ENCODE measurements at regions of chr2 and their contacts with region 1.

Region 1: DNA sequence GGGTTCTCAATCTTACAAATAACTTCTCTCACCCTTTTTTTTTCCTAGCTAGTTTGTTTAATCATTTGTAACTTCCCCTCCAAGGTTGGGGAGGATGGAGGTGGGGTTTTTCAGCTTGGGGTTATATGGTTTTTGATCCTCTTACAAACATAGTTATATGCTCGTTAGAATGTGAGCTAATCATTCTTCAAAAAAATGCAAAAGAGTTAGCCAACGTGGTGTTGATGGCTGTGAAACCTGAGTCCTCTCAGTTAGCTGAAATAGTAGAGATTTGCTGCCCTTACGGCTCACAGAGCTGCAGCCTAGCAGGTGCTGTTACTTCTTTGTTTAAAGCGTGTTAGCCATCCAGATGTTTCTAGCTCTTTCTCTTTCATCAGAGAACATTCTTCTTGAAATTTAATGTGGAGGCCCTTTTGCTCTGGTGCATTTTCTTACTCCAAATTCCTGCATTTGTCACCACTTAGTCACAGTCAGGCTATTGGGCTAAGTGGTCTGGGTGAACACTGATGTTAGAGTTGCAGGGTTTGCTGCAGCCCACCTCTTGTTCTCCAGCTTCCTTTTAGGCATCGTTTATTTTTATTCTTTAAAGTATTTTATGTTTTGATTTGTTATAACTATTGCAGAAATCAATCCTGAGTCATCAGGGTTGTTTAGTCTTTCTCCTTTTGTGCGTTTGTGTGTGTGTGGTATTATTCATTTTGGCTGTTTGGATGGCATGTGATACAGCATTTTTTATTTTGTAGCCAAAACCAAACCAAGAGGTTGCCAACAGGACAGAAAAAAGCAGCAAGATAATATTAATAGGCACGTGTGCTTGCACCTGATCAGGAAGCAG is 41.1 kb downstream of the LIMS1 start:
- DNase-seq: no peak
- ATAC-seq: no peak
- H3K4me3 ChIP-seq: no peak overlapping the region
- H3K27ac ChIP-seq: no peak overlapping the region
- H3K4me1 ChIP-seq: peaks cover 8 to 82% (median 64%) of the 10 kb centered on the region in 9 donors
- H3K27me3 ChIP-seq: no peaks in the 10 kb centered on the region
- CTCF ChIP-seq: no peak

Region 2: DNA sequence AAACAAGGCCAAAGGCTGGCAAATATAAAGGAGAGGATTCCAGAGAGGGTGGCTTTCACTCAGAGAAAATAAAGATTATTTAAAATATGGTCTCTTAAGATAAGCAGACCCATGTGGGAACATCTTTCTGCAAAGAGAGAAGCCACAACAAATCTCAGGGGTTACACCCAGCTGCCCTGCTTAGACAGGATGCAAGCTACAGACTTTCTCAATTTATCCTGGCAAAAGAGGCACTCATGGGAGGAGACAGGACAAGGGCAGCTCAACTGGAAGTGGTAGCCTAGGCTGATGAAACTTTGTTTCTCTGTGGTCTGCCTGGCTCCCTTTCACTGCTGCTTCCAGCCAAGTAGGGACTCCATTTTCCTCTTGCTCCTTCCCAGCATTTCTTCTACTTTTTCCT is 223.5 kb before region 1 on chr2:
- intact Hi-C with region 1: loop called in 6 of 10 experiments (anchors 5 to 10 kb)
- DNase-seq: no peak
- ATAC-seq: no peak
- H3K4me3 ChIP-seq: no peak overlapping the region
- H3K27ac ChIP-seq: no peak overlapping the region
- H3K4me1 ChIP-seq: no peaks in the 10 kb centered on the region
- H3K27me3 ChIP-seq: peaks cover 0 to 13% (median 0%) of the 10 kb centered on the region in 7 donors
- CTCF ChIP-seq: no peak

Region 3: DNA sequence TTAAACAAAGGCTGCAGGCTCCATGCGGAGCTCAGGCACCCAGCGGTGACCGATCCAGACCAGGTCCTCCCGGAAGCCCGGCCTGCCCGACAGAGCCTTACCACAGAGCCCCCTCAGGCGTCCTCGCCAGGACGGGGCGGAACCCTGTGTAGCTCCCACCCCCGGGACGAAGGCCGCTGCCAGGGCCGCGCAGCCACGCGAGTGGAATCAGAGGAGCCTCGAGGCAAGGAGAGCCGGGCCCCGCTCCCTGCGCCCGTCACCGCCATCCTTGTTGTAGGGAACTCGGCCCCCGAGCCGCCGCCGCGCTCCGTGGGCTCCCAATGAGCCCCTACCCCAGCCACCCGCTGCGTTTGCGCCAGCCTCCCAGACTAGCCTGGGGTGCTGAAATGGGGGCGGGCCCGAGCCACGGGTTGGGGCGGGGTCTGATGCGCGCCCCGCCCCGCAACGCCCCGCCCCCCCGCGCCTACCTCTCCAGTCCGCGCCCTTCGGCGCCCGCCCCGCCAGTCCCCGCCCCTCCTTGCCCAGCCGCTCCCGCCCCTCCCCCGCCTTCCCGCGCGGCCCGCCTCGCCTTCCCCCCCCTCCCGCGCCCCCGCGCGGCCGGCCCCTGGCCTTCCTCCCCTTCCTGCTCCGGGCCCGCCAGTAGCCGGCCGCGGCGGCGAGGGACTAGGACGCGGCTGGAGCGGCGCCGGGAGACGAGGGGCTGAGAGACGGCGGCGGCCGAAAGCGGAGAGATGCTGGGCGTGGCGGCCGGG is 41.3 kb before region 1 on chr2 and contains the start of gene LIMS1:
- intact Hi-C with region 1: loop called in 7 of 10 experiments (anchors 2 to 10 kb)
- DNase-seq: peak; percentile 93 to 95
- ATAC-seq: peak; percentile 96 to 99 (median 97)
- H3K4me3 ChIP-seq: peak within 1 kb of the TSS; percentile 62 to 87 (median 76)
- H3K27ac ChIP-seq: peak within 1 kb of the TSS; percentile 73 to 96 (median 89)
- H3K4me1 ChIP-seq: peaks cover 4 to 31% (median 26%) of the 10 kb centered on the region in 9 donors
- H3K27me3 ChIP-seq: no peaks in the 10 kb centered on the region
- CTCF ChIP-seq: peak in 1 of 9 donors; percentile 28
- total RNA-seq, gene LIMS1: 69.7 to 122 (median 78.9) TPM

Region 4: DNA sequence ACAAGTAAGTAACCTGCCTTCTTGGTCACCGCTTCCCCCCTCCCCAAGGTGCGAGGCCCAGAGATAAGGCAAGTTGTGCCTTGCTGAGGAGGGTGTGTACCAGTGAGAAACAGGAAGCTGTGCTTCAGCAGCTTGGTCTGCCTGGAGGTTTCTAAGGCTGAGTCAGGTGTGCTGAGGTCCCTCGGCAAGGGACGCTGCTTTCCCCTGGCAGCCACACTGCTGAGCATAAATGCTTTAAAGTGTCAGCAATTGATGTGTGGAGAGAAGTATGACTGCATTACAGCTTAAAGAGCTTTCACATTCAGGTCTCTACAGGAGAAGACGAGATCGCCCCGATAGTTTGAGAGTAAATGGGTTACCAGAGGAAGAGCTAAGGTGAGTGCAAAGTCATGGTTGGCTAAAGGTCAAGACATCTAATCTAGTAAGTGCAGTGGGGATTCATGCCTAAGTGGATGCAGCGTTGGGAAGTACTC is 45.8 kb after region 1 on chr2:
- intact Hi-C with region 1: no loop called
- DNase-seq: no peak
- ATAC-seq: peak; percentile 52 to 76 (median 72)
- H3K4me3 ChIP-seq: peak overlapping the region in 3 of 10 donors; percentile 7 to 25 (median 20)
- H3K27ac ChIP-seq: peak overlapping the region in 7 of 10 donors; percentile 13 to 84 (median 33)
- H3K4me1 ChIP-seq: peaks cover 5 to 74% (median 55%) of the 10 kb centered on the region in 9 donors
- H3K27me3 ChIP-seq: no peaks in the 10 kb centered on the region
- CTCF ChIP-seq: no peak

Region 5: DNA sequence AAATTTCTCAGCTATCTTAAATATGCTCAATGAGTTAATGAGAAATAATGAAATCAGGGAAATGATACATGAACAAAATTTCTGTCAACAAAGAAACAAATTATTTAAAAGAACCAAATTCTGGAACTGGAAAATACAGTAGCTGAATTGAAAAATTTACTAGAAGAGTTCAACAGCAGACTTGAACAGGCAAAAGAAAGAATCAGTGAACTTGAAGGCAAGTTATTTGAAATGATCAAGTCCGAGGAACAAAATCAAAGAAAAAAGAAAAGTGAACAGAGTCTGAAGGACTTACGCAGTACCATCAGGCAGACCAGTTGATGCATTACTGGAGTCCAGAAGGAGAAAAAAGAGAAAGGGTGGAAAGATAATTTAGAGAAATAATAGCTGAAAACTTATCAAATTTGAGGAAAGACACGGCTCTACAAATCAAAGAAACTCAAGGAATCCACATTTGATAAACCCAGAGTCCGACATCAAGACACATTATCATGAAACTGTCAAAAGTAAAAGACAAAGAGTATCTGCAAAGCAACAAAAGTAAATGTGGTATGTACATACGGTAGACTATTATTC is 294.8 kb after region 1 on chr2:
- intact Hi-C with region 1: no loop called
- DNase-seq: no peak
- ATAC-seq: no peak
- H3K4me3 ChIP-seq: no peak overlapping the region
- H3K27ac ChIP-seq: no peak overlapping the region
- H3K4me1 ChIP-seq: no peaks in the 10 kb centered on the region
- H3K27me3 ChIP-seq: no peaks in the 10 kb centered on the region
- CTCF ChIP-seq: no peak